Transverse colon (tissue), 4 donors: ENCODE measurements at regions of chr20 and their contacts with region 1.

Region 1: GRCh38 chr20:54103067-54103761 is 32.8 kb upstream of the BCAS1 start:
- DNase-seq: peak; percentile 90
- H3K4me3 ChIP-seq: no peak overlapping the region
- H3K27ac ChIP-seq: peak overlapping the region in 1 of 4 donors; percentile 6
- H3K4me1 ChIP-seq: peaks cover 0 to 16% (median 3%) of the 10 kb centered on the region in 4 donors
- H3K27me3 ChIP-seq: no peaks in the 10 kb centered on the region
- CTCF ChIP-seq: peak; percentile 86 to 93 (median 87)
- EP300 ChIP-seq: no peak
- POLR2A ChIP-seq: no peak

Region 2: GRCh38 chr20:54148947-54149503 is 45.8 kb after region 1 on chr20:
- in situ Hi-C with region 1: no loop called
- intact Hi-C with region 1: loop called (anchors 1 kb)
- DNase-seq: peak; percentile 83
- H3K4me3 ChIP-seq: no peak overlapping the region
- H3K27ac ChIP-seq: peak overlapping the region; percentile 24 to 45 (median 42)
- H3K4me1 ChIP-seq: peaks cover 0 to 5% (median 2%) of the 10 kb centered on the region in 4 donors
- H3K27me3 ChIP-seq: no peaks in the 10 kb centered on the region
- CTCF ChIP-seq: no peak
- EP300 ChIP-seq: no peak
- POLR2A ChIP-seq: no peak

Region 3: GRCh38 chr20:54160065-54161007 is 57.1 kb after region 1 on chr20:
- in situ Hi-C with region 1: no loop called
- intact Hi-C with region 1: no loop called
- DNase-seq: no peak
- H3K4me3 ChIP-seq: no peak overlapping the region
- H3K27ac ChIP-seq: no peak overlapping the region
- H3K4me1 ChIP-seq: no peaks in the 10 kb centered on the region
- H3K27me3 ChIP-seq: peaks cover 9% of the 10 kb centered on the region
- CTCF ChIP-seq: no peak
- EP300 ChIP-seq: no peak
- POLR2A ChIP-seq: no peak

Region 4: DNA sequence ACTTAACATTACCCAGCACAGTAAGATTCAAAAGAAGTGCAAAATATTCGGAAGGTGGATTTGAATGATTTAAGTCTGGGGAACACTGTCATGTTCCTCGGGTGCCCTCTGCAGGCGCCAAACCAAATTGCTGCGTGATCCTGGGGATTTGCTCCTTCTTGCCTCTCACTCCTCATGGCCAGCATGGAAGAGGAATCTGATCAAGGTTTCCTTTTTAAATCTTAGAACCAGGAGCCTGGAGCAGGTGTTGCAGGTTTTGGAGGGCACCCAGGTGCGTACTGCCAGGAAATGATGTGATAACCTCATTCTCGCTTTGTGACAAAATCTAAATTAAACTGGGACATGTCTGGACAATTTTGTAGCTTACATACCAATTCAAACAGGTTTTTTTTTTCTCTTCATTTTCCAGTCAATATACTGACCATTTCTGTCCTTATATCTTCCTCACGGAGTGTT is 96.5 kb after region 1 on chr20:
- in situ Hi-C with region 1: loop called (anchors 5 to 10 kb)
- intact Hi-C with region 1: loop called (anchors 5 kb)
- DNase-seq: peak; percentile 85
- H3K4me3 ChIP-seq: no peak overlapping the region
- H3K27ac ChIP-seq: no peak overlapping the region
- H3K4me1 ChIP-seq: peaks cover 0 to 15% (median 6%) of the 10 kb centered on the region in 4 donors
- H3K27me3 ChIP-seq: no peaks in the 10 kb centered on the region
- CTCF ChIP-seq: peak; percentile 86 to 90 (median 89)
- EP300 ChIP-seq: no peak
- POLR2A ChIP-seq: no peak

Region 5: DNA sequence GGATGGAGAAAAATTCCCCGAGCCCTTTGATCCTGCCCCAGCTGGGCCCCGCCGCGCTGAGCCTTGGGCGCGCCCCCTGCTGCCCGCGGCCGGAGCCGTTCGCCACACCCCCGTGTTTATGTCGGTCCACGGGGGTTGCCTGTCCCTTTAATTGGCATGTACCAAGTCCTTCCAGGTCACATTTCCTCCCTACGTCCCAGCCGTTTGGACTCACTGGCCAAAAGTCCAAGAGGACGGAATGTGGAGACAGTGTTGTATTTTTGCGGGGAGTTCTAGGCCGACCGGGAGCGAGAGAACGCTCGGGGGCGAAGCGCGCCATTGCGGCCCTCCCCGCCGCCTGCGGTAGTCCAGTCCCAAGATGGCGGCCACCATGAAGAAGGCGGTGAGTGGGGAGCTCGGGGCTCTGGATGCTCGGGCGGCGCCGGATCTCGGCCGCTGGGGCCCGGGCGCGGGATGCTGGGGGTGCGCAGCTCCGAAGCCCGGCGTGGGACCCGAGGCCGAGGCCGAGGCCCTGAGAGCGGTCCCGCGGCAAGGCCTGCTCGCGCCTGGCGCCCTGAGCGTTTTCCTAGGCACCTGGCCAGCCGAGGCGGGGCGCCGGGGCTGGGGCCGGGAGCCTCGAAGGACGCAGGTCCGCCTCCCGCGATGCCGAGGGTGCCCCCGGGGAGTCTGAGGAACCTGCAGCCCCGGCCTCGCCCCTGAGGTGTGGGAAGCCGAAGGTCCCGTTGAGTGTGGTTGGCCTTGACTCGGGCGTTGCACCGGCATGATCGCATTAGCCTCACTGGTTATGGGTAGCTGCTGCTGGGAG is 104.7 kb after region 1 on chr20 and contains the start of gene PFDN4:
- in situ Hi-C with region 1: loop called in 1 of 4 experiments (anchors 10 kb)
- intact Hi-C with region 1: no loop called
- DNase-seq: peak; percentile 88
- H3K4me3 ChIP-seq: peak within 1 kb of the TSS; percentile 84 to 97 (median 92)
- H3K27ac ChIP-seq: peak within 1 kb of the TSS; percentile 91 to 94 (median 92)
- H3K4me1 ChIP-seq: peaks cover 0 to 30% (median 16%) of the 10 kb centered on the region in 4 donors
- H3K27me3 ChIP-seq: no peaks in the 10 kb centered on the region
- CTCF ChIP-seq: peak; percentile 75 to 85 (median 84)
- EP300 ChIP-seq: no peak
- POLR2A ChIP-seq: no peak
- total RNA-seq, gene PFDN4: 4.6 to 73.5 (median 28.5) TPM

Region 6: GRCh38 chr20:54649511-54649962 is 546.3 kb after region 1 on chr20:
- in situ Hi-C with region 1: loop called (anchors 10 to 25 kb)
- intact Hi-C with region 1: no loop called
- DNase-seq: peak; percentile 77
- H3K4me3 ChIP-seq: no peak overlapping the region
- H3K27ac ChIP-seq: no peak overlapping the region
- H3K4me1 ChIP-seq: no peaks in the 10 kb centered on the region
- H3K27me3 ChIP-seq: peaks cover 7% of the 10 kb centered on the region
- CTCF ChIP-seq: peak; percentile 51 to 79 (median 74)
- EP300 ChIP-seq: no peak
- POLR2A ChIP-seq: no peak